AG04450 (cell line): ENCODE measurements at regions of chr6 and their contacts with region 1.

Region 1: GRCh38 chr6:15264902-15265761 is 19.3 kb downstream of the JARID2 start:
- DNase-seq: peak; percentile 66
- H3K4me3 ChIP-seq: no peak overlapping the region
- H3K27ac ChIP-seq: no peak overlapping the region
- H3K27me3 ChIP-seq: no peaks in the 10 kb centered on the region
- CTCF ChIP-seq: no peak

Region 2: DNA sequence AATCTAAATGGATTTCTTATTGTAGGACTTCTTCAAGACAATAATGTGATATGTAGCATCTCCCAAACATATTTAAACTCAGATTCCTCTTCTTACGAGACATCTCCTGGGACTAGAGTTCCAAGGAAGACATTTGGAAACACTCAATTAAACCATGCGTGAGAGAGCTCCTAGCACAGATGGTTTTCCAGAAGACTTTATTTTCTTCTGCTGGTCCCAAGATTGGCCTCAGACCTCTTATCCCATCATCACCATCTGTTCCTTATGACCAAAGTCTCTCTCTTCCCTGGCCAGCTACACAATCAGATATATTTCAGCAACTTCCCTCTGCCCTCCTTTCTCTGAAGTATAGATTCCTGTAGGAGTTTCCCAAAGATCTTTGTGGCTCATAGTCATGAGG is 112.4 kb before region 1 on chr6:
- CTCF ChIA-PET with region 1: no interaction called
- POLR2A ChIA-PET with region 1: no interaction called
- DNase-seq: no peak
- H3K4me3 ChIP-seq: no peak overlapping the region
- H3K27ac ChIP-seq: no peak overlapping the region
- H3K27me3 ChIP-seq: no peaks in the 10 kb centered on the region
- CTCF ChIP-seq: no peak

Region 3: GRCh38 chr6:15207923-15208322 is 57.2 kb before region 1 on chr6:
- CTCF ChIA-PET with region 1: no interaction called
- POLR2A ChIA-PET with region 1: no interaction called
- DNase-seq: no peak
- H3K4me3 ChIP-seq: no peak overlapping the region
- H3K27ac ChIP-seq: no peak overlapping the region
- H3K27me3 ChIP-seq: no peaks in the 10 kb centered on the region
- CTCF ChIP-seq: no peak

Region 4: DNA sequence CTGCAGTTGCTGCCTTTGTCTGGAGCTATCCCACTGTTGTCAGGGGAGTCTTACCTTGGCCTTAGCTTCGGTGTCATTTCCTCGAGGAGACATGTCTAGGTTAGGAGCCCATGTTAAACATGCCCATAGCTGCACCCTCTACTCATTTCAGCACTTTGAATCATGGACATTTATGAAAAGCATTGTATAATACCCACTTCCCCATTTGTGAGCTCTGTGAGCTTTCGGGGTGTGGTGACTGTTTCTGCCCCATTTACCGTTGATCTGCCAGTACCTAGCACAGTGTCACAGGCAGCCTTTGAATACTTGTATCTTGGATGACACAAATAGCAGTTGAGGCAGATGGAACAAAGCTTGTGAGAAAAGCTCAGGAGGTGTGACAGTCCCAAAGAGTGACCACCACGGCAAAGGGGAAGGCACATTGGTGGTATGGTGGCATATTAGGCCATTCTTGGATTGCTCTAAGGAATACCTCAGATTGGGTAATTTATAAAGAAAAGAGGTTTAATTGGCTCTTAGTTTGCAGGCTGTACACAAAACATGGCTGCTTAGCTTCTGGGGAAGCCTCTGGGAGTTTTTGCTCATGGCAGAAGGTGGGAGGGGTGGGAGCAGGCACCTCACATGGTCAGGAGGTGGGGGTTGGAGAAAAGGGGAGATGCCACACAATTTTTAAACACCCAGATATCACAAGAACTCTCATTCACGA is 22.7 kb after region 1 on chr6:
- CTCF ChIA-PET with region 1: no interaction called
- POLR2A ChIA-PET with region 1: interaction called, 12 read pairs
- DNase-seq: no peak
- H3K4me3 ChIP-seq: no peak overlapping the region
- H3K27ac ChIP-seq: no peak overlapping the region
- H3K27me3 ChIP-seq: no peaks in the 10 kb centered on the region
- CTCF ChIP-seq: no peak

Region 5: GRCh38 chr6:15735567-15736265 is 470.6 kb after region 1 on chr6:
- CTCF ChIA-PET with region 1: no interaction called
- POLR2A ChIA-PET with region 1: no interaction called
- DNase-seq: peak; percentile 59
- H3K4me3 ChIP-seq: no peak overlapping the region
- H3K27ac ChIP-seq: peak overlapping the region; percentile 42
- H3K27me3 ChIP-seq: peaks cover 8% of the 10 kb centered on the region
- CTCF ChIP-seq: no peak